Caco-2 (cell line): ENCODE measurements at regions of chr12 and their contacts with region 1.

Region 1: DNA sequence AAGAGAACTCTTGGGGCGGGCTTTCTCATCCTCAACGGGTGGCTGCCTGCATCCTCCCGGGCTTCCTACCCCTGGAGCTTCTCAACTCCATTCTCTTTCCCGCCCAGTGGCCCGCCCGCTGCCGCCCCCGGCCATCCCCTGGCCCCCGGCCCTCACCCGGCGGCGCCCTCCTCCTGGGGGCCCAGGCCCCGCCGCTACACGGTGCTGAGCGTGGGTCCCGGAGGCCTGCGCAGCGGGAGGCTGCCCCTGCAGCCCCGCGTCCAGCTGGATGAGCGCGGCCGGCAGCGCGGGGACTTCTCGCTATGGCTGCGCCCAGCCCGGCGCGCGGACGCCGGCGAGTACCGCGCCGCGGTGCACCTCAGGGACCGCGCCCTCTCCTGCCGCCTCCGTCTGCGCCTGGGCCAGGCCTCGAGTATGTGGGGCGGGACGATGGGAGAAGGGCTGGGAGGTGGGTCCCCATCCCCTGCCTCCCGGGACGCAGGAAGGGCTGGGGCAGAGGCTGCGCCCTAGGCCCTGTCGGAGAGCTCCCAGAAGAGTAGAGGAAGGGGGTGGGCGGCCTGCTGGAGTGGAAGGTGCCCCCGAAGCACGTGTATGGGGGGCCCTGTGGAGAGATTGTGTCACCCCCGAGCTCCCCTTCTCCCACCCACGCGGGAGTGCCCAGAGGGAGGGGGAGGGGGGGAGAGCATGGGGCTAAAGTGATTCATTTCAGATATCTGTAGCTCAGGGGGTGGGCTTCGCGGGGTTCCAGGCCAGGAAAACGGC is 1.5 kb downstream of the LAG3 start:
- DNase-seq: no peak
- H3K4me3 ChIP-seq: no peak overlapping the region
- H3K4me3 Mint-ChIP-seq: no peak overlapping the region
- H3K27ac Mint-ChIP-seq: no peak overlapping the region
- H3K4me1 ChIP-seq: peaks cover 27% of the 10 kb centered on the region
- H3K4me1 Mint-ChIP-seq: peaks cover 49% of the 10 kb centered on the region
- H3K27me3 ChIP-seq: no peaks in the 10 kb centered on the region
- H3K27me3 Mint-ChIP-seq: no peaks in the 10 kb centered on the region
- CTCF ChIP-seq: no peak

Region 2: DNA sequence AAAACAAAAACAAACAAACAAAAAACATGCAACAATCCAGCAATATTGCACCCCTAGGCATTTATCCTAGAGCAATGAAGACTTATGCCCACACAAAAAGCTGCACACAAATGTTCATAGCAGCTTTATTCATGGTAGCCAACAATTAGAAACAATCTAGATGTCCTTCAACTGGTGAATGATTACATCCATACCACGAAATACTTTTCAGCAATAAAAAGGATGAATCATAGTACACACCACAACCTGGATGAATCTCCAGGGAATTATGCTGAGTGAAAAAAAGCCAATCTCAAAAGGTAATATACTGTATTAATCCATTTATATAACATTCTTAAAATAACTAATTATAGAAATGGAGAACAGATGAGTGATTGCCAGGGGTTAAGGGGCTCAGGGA is 33.4 kb after region 1 on chr12:
- CTCF ChIA-PET with region 1: no interaction called
- POLR2A ChIA-PET with region 1: interaction called, 12 read pairs
- intact Hi-C with region 1: no loop called
- DNase-seq: no peak
- H3K4me3 ChIP-seq: no peak overlapping the region
- H3K4me3 Mint-ChIP-seq: no peak overlapping the region
- H3K27ac Mint-ChIP-seq: no peak overlapping the region
- H3K4me1 ChIP-seq: no peaks in the 10 kb centered on the region; the same call in 1 of the 2 replicates
- H3K4me1 Mint-ChIP-seq: peaks cover 10% of the 10 kb centered on the region
- H3K27me3 ChIP-seq: no peaks in the 10 kb centered on the region
- H3K27me3 Mint-ChIP-seq: no peaks in the 10 kb centered on the region
- CTCF ChIP-seq: no peak